Dorsolateral prefrontal cortex (tissue), 120 donors: ENCODE measurements at regions of chr17 and their contacts with region 1.

Region 1: GRCh38 chr17:29376667-29377270 is 13.4 kb upstream of the TAOK1 start:
- DNase-seq: peak; percentile 50 to 96 (median 90)
- H3K4me3 ChIP-seq: peak overlapping the region in 57 of 59 donors; percentile 10 to 69 (median 48)
- H3K27ac ChIP-seq: peak overlapping the region; percentile 83 to 100 (median 98)
- H3K27me3 ChIP-seq: no peaks in the 10 kb centered on the region
- CTCF ChIP-seq: peak in 17 of 56 donors; percentile 4 to 44 (median 22)

Region 2: GRCh38 chr17:29180034-29180787 is 196.6 kb before region 1 on chr17 and contains the start of gene MYO18A:
- intact Hi-C with region 1: no loop called
- DNase-seq: peak; percentile 55 to 89 (median 74)
- H3K4me3 ChIP-seq: peak within 1 kb of the TSS; percentile 55 to 91 (median 78)
- H3K27ac ChIP-seq: peak within 1 kb of the TSS; percentile 85 to 100 (median 98)
- H3K27me3 ChIP-seq: no peaks in the 10 kb centered on the region
- CTCF ChIP-seq: peak; percentile 37 to 94 (median 76)
- total RNA-seq, gene MYO18A: 93.9 to 275 (median 143) TPM

Region 3: GRCh38 chr17:29469276-29469675 is 92.5 kb after region 1 on chr17:
- intact Hi-C with region 1: no loop called
- DNase-seq: no peak
- H3K4me3 ChIP-seq: no peak overlapping the region
- H3K27ac ChIP-seq: no peak overlapping the region
- H3K27me3 ChIP-seq: no peaks in the 10 kb centered on the region
- CTCF ChIP-seq: no peak

Region 4: DNA sequence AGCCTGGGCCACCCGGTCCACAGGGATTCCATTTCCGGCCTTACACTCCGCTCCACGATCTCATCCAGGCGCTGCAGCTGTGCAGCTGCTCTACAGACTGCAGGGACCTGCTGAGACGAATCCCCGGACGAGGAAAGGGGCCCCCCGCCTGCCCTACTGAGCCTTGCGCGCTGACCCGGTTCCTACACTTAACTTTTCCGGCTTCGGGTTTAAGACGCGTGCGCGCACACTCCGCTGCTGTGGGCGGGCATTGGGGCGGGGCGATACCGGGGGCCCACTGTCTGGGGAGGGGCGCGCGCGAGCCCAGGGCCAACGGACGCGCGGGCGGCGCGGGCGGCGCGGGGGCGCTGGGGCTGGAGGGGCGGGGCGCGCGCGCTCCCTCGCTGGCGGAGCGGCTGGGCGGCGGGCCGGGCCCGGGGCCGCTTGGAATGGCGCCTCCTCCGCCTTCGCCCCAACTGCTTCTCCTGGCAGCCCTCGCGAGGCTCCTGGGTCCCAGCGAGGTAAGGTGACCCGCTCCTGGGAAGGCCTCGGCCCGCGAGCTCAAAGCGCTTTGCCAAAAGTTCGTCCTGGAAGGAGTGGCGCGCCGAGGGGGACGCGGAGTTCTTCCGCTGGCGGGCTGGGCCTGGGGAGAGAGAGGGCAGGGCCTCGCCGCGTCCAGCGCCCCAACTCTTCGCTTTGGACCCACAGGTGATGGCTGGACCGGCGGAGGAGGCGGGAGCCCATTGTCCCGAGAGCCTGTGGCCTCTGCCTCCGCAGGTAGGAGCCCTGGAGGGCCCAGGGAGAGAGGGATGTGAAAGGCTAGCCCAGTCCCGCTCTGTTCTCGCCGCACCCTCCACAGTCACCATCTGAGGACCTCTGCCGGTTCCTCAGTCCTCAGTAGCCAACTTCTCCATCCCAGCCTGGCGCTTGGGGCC is 191.8 kb after region 1 on chr17 and contains the start of gene TP53I13:
- intact Hi-C with region 1: loop called (anchors 5 to 10 kb)
- DNase-seq: peak in 8 of 10 donors; percentile 61 to 85 (median 78)
- H3K4me3 ChIP-seq: peak within 1 kb of the TSS; percentile 39 to 89 (median 74)
- H3K27ac ChIP-seq: peak within 1 kb of the TSS; percentile 63 to 94 (median 87)
- H3K27me3 ChIP-seq: peaks cover 0 to 13% (median 0%) of the 10 kb centered on the region in 45 donors
- CTCF ChIP-seq: peak in 1 of 56 donors; percentile 14
- total RNA-seq, gene TP53I13: 10.1 to 40.2 (median 20.1) TPM